SK-N-SH (cell line): ENCODE measurements at regions of chr19 and their contacts with region 1.

Region 1: GRCh38 chr19:33125929-33126388 is 6.0 kb upstream of the WDR88 start:
- DNase-seq: peak; percentile 81
- H3K4me3 ChIP-seq: no peak overlapping the region; a peak in 1 of 4 replicates
- H3K27ac ChIP-seq: no peak overlapping the region
- H3K4me1 ChIP-seq: peaks cover 0 to 5% of the 10 kb centered on the region in 2 experiments; a peak in 1 of 4 replicates
- H3K27me3 ChIP-seq: no peaks in the 10 kb centered on the region
- CTCF ChIP-seq: peak; percentile 83
- EP300 ChIP-seq: no peak
- RAD21 ChIP-seq: peak; percentile 87

Region 2: DNA sequence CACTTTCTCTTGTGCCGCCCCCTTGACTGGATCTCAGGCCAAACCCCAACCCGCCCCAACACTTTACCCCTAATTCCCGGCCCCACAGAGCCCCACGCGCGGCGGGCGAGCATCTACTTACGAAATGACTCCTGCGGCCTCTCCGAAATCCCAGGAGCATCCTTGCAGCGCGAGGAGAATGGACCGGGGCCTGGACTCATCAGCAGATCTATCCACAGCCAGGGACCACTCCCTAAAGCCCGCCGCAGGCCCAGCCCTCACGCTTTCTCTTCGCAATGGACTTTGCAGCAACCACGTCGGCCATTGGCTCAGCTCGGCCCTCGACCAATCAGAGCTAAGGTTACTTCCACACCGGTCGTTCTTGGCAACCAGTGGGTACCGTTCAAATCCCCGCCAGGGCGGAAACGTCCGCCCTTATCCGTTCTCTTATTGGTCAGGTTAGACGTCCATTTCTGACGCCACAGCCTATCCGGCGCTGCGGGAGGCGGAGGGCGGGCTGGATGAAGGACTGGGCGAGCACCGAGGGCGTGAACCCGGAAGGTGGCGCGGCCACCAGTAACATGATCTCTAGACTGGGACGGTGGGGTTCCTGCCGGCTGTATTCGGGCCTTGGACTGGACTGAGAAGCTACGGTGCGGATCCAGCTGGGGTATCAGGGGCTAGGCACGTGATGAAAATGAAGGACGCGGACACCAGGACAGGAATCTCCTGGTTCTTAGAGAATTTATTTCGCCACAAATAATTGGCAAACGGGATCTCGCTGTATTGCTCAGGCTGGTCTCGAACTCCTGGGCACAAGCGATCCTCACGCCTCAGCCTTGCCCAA is 154.0 kb before region 1 on chr19 and contains the starts of genes CEP89 and FAAP24:
- CTCF ChIA-PET with region 1: interaction called, 215 read pairs
- POLR2A ChIA-PET with region 1: no interaction called
- DNase-seq: peak; percentile 97
- H3K4me3 ChIP-seq: peak within 1 kb of the TSS; percentile 49 to 88
- H3K27ac ChIP-seq: peak within 1 kb of the TSS; percentile 50 to 51; a peak in 2 of 4 replicates
- H3K4me1 ChIP-seq: peaks cover 0 to 10% of the 10 kb centered on the region in 2 experiments; a peak in 1 of 4 replicates
- H3K27me3 ChIP-seq: no peaks in the 10 kb centered on the region
- CTCF ChIP-seq: no peak
- EP300 ChIP-seq: no peak
- RAD21 ChIP-seq: no peak
- polyA plus RNA-seq, gene CEP89: 15.7 and 16.4 TPM in 2 replicates
- polyA plus RNA-seq, gene FAAP24: 3.3 and 3.9 TPM in 2 replicates

Region 3: DNA sequence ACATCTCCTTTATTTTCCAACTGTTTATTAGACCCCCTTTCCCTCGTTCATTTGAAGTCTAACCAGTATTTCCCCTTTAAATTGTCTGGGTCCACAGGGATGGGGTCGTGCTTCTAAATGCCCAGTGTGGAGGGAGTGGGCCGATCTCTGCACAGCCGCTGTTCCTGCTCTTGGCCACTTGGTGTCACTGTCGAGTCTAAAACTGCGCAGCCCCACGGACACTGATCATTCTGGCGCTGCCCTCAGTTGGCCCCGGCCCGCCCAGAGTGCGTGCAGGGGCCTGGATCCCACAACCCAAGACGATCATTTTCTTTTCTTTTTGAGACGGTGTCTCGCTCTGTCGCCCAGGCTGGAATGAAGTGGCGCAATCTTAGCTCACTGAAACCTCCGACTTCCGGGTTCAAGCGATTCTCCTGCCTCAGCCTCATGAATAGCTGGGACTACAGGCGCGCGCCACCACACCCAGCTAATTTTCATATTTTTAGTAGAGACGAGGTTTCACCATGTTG is 18.0 kb after region 1 on chr19:
- CTCF ChIA-PET with region 1: interaction called, 10 read pairs
- POLR2A ChIA-PET with region 1: no interaction called
- DNase-seq: peak; percentile 88
- H3K4me3 ChIP-seq: peak overlapping the region in 1 of 2 experiments; percentile 16; a peak in 1 of 4 replicates
- H3K27ac ChIP-seq: no peak overlapping the region
- H3K4me1 ChIP-seq: peaks cover 0 to 4% of the 10 kb centered on the region in 2 experiments; a peak in 1 of 4 replicates
- H3K27me3 ChIP-seq: no peaks in the 10 kb centered on the region
- CTCF ChIP-seq: peak; percentile 91
- EP300 ChIP-seq: no peak
- RAD21 ChIP-seq: peak; percentile 90

Region 4: GRCh38 chr19:33176670-33177416 is 50.9 kb after region 1 on chr19:
- CTCF ChIA-PET with region 1: interaction called, 27 read pairs
- POLR2A ChIA-PET with region 1: interaction called, 21 read pairs
- DNase-seq: peak; percentile 97
- H3K4me3 ChIP-seq: peak overlapping the region; percentile 80 to 81
- H3K27ac ChIP-seq: peak overlapping the region; percentile 83 to 98
- H3K4me1 ChIP-seq: peaks cover 0 to 19% of the 10 kb centered on the region in 2 experiments; a peak in 2 of 4 replicates
- H3K27me3 ChIP-seq: no peaks in the 10 kb centered on the region
- CTCF ChIP-seq: 0 out of 2 replicates have a peak, but pooled peaks have one; percentile 11
- EP300 ChIP-seq: peak in 1 of 2 experiments; percentile 46; a peak in 1 of 4 replicates
- RAD21 ChIP-seq: no peak

Region 5: GRCh38 chr19:33193865-33194362 is 68.0 kb after region 1 on chr19 and contains the start of gene LRP3:
- CTCF ChIA-PET with region 1: interaction called, 11 read pairs
- POLR2A ChIA-PET with region 1: interaction called, 4 read pairs
- DNase-seq: peak; percentile 93
- H3K4me3 ChIP-seq: peak within 1 kb of the TSS; percentile 66
- H3K27ac ChIP-seq: peak within 1 kb of the TSS in 1 of 2 experiments; percentile 53; a peak in 2 of 4 replicates
- H3K4me1 ChIP-seq: peaks cover 0 to 13% of the 10 kb centered on the region in 2 experiments; a peak in 1 of 4 replicates
- H3K27me3 ChIP-seq: no peaks in the 10 kb centered on the region
- CTCF ChIP-seq: no peak
- EP300 ChIP-seq: no peak
- RAD21 ChIP-seq: no peak
- polyA plus RNA-seq, gene LRP3: 7.5 and 8.2 TPM in 2 replicates